MCF 10A (cell line): ENCODE measurements at regions of chr12 and their contacts with region 1.

Region 1: DNA sequence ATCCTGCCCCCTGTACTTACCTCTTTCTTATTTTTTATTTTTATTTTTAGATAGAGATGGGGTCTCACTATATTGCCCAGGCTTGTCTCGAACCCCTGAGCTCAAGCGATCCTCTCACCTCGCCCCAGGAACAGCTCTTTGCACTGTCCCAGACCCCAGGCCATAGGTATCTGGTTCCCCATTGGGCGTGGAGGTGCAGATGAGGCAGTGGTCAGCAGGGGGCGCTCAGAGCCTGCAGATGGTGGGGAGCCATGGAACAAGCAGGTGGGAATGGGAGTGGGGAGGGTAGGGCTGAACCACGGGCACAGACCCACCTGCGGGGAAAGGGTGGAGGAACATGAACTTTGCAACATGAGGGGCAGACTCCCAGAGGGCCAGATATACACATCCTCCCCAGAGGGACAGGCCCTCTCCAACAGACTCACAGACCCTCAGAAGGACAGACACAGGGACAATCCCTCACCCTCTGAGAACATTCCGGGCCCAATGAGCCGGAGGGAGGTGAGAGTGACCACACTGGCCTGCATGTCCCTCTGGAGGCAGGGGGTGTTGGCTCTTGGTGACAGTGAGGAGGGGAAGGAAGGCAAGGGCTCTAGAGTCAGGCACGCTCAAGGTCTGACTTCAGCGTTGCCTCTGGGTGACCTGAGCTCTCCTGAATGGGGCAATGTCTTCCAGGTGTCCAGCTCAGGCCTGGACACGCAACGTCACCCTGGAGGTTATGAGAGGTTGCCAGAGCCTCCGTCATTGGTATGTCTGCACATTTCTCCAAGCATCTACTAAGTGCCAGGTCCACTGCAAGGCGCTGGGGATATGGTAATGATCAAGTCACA is 34.9 kb downstream of the KRT80 start:
- DNase-seq: peak; percentile 85
- H3K4me3 Mint-ChIP-seq: no peak overlapping the region
- H3K27ac Mint-ChIP-seq: peak overlapping the region; percentile 91
- H3K4me1 Mint-ChIP-seq: peaks cover 30% of the 10 kb centered on the region
- H3K27me3 Mint-ChIP-seq: no peaks in the 10 kb centered on the region
- CTCF ChIP-seq: peak; percentile 98

Region 2: DNA sequence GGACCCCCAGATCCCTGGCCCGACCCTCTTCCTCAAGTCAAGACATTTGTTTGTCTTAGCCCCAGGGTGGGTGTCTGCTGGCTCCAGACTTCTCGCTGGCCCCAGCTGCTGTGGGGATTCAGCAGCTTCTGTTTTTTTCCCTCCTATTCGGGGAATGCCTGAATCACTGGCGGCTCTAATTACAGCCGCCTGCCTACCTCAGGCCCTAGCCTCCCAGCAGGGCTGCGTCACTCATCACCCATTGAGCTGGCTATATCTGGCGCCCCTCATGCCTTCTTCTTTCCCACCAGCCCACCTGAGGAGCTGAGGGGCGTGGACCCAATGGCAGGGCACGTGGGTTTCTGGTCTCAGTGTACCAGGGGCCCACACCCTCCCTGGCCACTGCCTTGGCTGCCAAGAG is 24.8 kb after region 1 on chr12:
- CTCF ChIA-PET with region 1: interaction called, 11 read pairs
- POLR2A ChIA-PET with region 1: interaction called, 7 read pairs
- intact Hi-C with region 1: no loop called
- DNase-seq: peak; percentile 84
- H3K4me3 Mint-ChIP-seq: no peak overlapping the region
- H3K27ac Mint-ChIP-seq: no peak overlapping the region
- H3K4me1 Mint-ChIP-seq: peaks cover 56% of the 10 kb centered on the region
- H3K27me3 Mint-ChIP-seq: no peaks in the 10 kb centered on the region
- CTCF ChIP-seq: no peak

Region 3: DNA sequence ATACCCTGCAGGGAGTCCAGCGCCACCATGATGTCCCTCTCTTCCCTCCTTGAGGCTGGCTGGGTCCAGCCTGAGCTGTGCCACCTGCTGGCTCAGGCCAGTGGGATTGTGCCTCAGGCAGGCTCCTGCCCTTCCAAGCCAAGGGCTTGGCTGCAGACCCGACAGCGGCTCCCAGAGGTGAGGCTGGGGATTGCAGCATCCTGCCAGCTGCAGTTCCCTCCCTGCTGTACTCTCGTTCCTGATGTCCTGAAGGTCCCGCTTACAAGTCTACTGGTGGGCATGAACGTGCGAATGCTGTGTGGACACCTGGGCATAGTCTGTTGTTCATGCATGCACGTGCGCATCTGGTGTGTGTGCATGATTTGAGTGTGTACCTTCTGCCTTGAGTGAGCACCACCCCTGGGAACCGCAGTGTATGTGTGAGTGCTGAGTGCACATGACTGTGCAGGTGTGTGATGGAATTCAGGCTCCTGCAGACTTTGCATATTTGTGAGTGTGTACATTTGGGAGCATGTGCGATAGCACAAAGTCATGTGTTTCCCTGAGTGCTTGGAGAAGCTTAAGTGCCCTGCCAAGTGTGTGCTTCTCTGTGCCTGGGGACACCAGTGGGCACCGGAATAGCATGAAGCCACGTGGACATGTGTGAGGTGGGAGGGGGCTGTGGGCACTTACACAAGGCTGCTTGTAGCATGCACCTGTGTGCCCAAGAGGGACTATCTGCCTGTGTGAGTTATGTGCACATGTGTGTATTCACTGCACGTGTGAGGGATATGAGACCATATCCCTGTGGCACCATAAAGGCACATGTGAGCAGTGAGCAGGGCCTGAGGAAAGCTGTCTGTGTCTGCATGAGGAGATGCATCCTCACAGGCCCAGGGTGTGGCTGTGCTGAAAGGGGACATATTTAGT is 56.8 kb after region 1 on chr12:
- CTCF ChIA-PET with region 1: interaction called, 16 read pairs
- POLR2A ChIA-PET with region 1: interaction called, 3 read pairs
- intact Hi-C with region 1: no loop called
- DNase-seq: peak; percentile 85
- H3K4me3 Mint-ChIP-seq: no peak overlapping the region
- H3K27ac Mint-ChIP-seq: no peak overlapping the region
- H3K4me1 Mint-ChIP-seq: peaks cover 71% of the 10 kb centered on the region
- H3K27me3 Mint-ChIP-seq: no peaks in the 10 kb centered on the region
- CTCF ChIP-seq: peak; percentile 95

Region 4: DNA sequence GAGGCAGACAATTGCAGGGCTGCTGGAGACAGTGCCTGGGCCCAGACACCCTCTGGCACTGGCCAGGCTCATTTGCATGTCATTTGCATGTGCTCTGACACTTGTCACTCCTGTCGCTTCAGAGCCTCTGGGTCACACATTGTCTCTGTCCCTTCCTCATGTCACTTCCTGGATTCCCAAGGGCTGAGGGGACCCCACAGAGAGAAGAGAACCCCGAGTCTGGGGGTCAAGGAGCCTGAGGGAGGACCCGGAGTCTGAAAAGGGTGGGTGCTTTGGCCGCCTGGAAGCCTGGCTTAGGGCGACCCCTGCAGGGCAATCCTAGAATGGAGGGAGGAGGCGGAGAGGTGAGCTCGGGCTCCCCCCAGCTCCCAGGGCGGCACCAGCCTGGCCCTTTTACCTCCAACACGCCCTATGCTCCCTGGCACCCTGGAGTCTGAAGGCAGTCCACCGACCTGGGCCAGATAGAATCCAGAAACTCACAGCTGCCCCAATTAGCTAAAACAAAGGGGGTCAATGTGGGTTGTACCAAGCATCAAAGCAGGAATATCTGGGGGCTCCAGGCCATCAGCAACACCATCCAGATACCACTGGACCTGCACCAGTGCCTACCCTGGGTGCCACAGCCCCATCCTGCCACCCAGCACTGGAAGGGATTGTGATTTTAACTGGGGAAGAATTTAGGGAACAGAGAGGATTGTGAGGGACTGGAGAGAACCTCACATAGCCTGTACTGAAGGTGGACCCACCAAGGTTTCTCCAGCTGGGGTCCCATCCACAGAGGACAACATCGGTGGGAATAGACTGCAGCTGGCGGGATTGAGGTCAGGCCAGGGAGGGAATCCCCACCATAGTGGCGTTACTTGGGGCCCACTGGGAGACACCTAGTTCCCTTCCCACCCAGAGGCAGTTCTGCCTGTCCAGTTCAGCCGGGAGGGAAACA is 713.7 kb after region 1 on chr12:
- CTCF ChIA-PET with region 1: interaction called, 313 read pairs
- POLR2A ChIA-PET with region 1: interaction called, 142 read pairs
- intact Hi-C with region 1: no loop called
- DNase-seq: peak; percentile 84
- H3K4me3 Mint-ChIP-seq: peak overlapping the region; percentile 14
- H3K27ac Mint-ChIP-seq: peak overlapping the region; percentile 90
- H3K4me1 Mint-ChIP-seq: peaks cover 77% of the 10 kb centered on the region
- H3K27me3 Mint-ChIP-seq: no peaks in the 10 kb centered on the region
- CTCF ChIP-seq: peak; percentile 95